Endothelial cell of umbilical vein (primary cell): ENCODE measurements at regions of chr20 and their contacts with region 1.

Region 1: GRCh38 chr20:59006864-59007664 is at the start of gene CTSZ:
- DNase-seq: peak; percentile 34
- H3K4me3 ChIP-seq: peak within 1 kb of the TSS; percentile 64 to 74 (median 68)
- H3K27ac ChIP-seq: peak within 1 kb of the TSS; percentile 89
- H3K4me1 ChIP-seq: peaks cover 41% of the 10 kb centered on the region
- H3K27me3 ChIP-seq: no peaks in the 10 kb centered on the region
- CTCF ChIP-seq: no peak
- POLR2A ChIP-seq: peak; percentile 81
- total RNA-seq, gene CTSZ: 299 and 304 TPM in 2 replicates

Region 2: GRCh38 chr20:58890518-58891085 is 116.5 kb before region 1 on chr20:
- CTCF ChIA-PET with region 1: no interaction called
- POLR2A ChIA-PET with region 1: no interaction called
- dilution Hi-C with region 1: no loop called
- intact Hi-C with region 1: loop called (anchors 1 kb)
- DNase-seq: peak; percentile 87
- H3K4me3 ChIP-seq: peak overlapping the region; percentile 17 to 91 (median 70)
- H3K27ac ChIP-seq: peak overlapping the region; percentile 47
- H3K4me1 ChIP-seq: peaks cover 30% of the 10 kb centered on the region
- H3K27me3 ChIP-seq: peaks cover 2% of the 10 kb centered on the region in 2 experiments
- CTCF ChIP-seq: no peak
- POLR2A ChIP-seq: peak; percentile 25

Region 3: DNA sequence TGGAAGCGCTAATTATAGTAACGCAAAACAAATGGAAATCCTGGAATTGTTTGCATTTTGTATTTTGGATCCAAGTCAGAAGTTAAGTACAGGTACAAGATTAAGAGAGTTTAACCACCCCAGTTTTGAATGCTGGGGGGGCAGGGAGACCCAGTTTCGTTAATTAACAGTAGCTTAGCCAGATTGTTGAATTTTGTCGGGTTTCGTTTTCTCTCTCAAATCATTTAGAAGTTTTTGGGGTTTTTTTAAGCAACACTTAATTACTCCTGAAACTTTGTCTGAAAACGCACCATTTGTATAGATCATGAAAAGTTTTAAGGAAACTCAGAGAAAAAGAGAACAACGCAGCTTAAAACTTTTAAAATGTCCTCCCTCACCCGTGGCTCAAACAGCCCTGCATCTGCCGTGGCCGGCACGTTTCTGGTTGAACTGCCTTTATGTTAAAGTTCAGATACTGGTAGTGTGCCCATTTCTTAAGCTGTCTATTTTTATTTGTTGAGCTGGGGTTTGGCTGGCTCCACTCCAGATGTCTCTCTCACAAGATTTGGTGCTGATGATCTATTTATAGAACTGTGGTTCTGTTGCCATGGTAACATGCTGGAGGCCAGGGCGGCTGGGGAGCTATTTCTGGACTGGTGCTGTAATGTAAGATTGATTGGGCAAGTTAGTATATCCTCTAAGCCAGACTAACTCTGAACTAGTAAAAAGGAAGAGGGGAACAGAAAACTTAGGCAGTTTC is 99.5 kb before region 1 on chr20:
- CTCF ChIA-PET with region 1: no interaction called
- POLR2A ChIA-PET with region 1: no interaction called
- dilution Hi-C with region 1: no loop called
- intact Hi-C with region 1: loop called (anchors 1 kb)
- DNase-seq: peak; percentile 97
- H3K4me3 ChIP-seq: peak overlapping the region in 1 of 3 experiments; percentile 39
- H3K27ac ChIP-seq: peak overlapping the region; percentile 97
- H3K4me1 ChIP-seq: peaks cover 34% of the 10 kb centered on the region
- H3K27me3 ChIP-seq: no peaks in the 10 kb centered on the region
- CTCF ChIP-seq: no peak
- POLR2A ChIP-seq: no peak

Region 4: DNA sequence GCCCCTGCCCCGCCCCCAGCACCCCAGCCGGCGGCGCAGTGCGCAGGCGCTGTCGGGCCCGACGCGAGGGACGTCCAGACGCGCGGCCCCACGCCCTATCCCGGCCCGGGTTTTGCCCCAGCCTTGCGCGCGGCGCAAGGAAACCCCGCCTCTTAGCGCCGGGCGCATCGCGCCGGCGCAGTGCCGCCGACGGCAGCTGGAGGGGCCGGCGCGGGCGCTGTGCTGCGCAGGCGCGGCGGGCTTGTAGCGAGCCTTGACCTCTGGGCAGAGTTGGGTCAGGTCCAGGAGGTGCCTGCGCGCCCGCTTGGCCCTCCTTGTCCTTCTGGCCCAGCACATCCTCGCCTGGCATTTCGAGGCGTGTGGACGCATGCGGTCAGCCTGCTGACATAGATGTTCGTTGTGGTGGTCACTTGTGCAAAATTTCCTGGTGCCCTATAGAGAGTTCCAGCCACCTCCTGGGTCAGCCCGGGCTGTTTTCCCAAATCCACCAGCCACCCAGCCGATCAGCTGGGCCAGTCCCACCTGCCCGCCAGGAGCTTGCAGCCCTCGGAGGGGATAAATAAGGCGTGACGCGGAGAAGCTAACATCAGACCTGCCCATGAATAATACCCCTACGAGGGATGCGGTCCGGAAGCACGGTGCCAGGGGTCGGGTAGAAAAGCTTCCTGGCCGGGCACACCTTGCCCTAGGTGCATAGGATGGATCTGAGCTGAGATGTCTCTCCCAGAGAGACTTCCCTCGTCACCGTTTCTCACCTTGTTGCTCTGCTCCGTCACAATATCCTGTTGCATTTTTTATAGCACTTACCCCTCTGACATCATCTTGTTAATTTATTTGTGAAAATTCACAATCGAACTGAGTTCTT is 36.0 kb after region 1 on chr20:
- CTCF ChIA-PET with region 1: no interaction called
- POLR2A ChIA-PET with region 1: no interaction called
- dilution Hi-C with region 1: no loop called
- intact Hi-C with region 1: loop called (anchors 1 kb)
- DNase-seq: peak; percentile 90
- H3K4me3 ChIP-seq: peak overlapping the region; percentile 26 to 91 (median 69)
- H3K27ac ChIP-seq: no peak overlapping the region
- H3K4me1 ChIP-seq: peaks cover 8% of the 10 kb centered on the region
- H3K27me3 ChIP-seq: peaks cover 0 to under 1% of the 10 kb centered on the region in 2 experiments
- CTCF ChIP-seq: no peak
- POLR2A ChIP-seq: no peak

Region 5: GRCh38 chr20:59055295-59055694 is 48.2 kb after region 1 on chr20:
- CTCF ChIA-PET with region 1: no interaction called
- POLR2A ChIA-PET with region 1: no interaction called
- dilution Hi-C with region 1: no loop called
- intact Hi-C with region 1: no loop called
- DNase-seq: peak; percentile 51
- H3K4me3 ChIP-seq: no peak overlapping the region
- H3K27ac ChIP-seq: no peak overlapping the region
- H3K4me1 ChIP-seq: no peaks in the 10 kb centered on the region
- H3K27me3 ChIP-seq: peaks cover 15 to 30% of the 10 kb centered on the region in 2 experiments
- CTCF ChIP-seq: peak in 1 of 2 donors; percentile 24
- POLR2A ChIP-seq: no peak

Region 6: GRCh38 chr20:59940174-59940971 is 933.3 kb after region 1 on chr20 and contains the starts of genes FAM217B and PPP1R3D:
- CTCF ChIA-PET with region 1: no interaction called
- POLR2A ChIA-PET with region 1: no interaction called
- dilution Hi-C with region 1: no loop called
- intact Hi-C with region 1: loop called (anchors 10 kb)
- DNase-seq: peak; percentile 97
- H3K4me3 ChIP-seq: peak within 1 kb of the TSS; percentile 60 to 87 (median 85)
- H3K27ac ChIP-seq: peak within 1 kb of the TSS; percentile 90
- H3K4me1 ChIP-seq: peaks cover 13% of the 10 kb centered on the region
- H3K27me3 ChIP-seq: no peaks in the 10 kb centered on the region
- CTCF ChIP-seq: peak; percentile 4 to 6
- POLR2A ChIP-seq: peak; percentile 77
- total RNA-seq, gene FAM217B: 8.2 and 9.9 TPM in 2 replicates
- total RNA-seq, gene PPP1R3D: 4.9 and 5.2 TPM in 2 replicates